Activated CD4-positive, alpha-beta T cell treated with anti-CD3 and anti-CD28 coated beads, Interleukin-2, amount 10 ng/mL, durations not matched to agents 24 days and 14 days (primary cell): ENCODE measurements at regions of chr10 and their contacts with region 1.

Region 1: GRCh38 chr10:50540069-50540825 is 83.5 kb downstream of the SGMS1 start:
- DNase-seq: peak; percentile 71
- H3K4me3 Mint-ChIP-seq: peak overlapping the region; percentile 63
- H3K27ac Mint-ChIP-seq: peak overlapping the region; percentile 87
- H3K4me1 Mint-ChIP-seq: peaks cover 72% of the 10 kb centered on the region
- H3K27me3 Mint-ChIP-seq: no peaks in the 10 kb centered on the region

Region 2: GRCh38 chr10:50325449-50326171 is 214.6 kb before region 1 on chr10:
- intact Hi-C with region 1: loop called (anchors 2 kb)
- DNase-seq: peak; percentile 74
- H3K4me3 Mint-ChIP-seq: peak overlapping the region; percentile 57
- H3K27ac Mint-ChIP-seq: peak overlapping the region; percentile 39
- H3K4me1 Mint-ChIP-seq: peaks cover 47% of the 10 kb centered on the region
- H3K27me3 Mint-ChIP-seq: no peaks in the 10 kb centered on the region

Region 3: GRCh38 chr10:50431791-50432190 is 108.5 kb before region 1 on chr10:
- intact Hi-C with region 1: loop called (anchors 1 kb)
- DNase-seq: peak; percentile 57
- H3K4me3 Mint-ChIP-seq: peak overlapping the region; percentile 11
- H3K27ac Mint-ChIP-seq: peak overlapping the region; percentile 14
- H3K4me1 Mint-ChIP-seq: peaks cover 22% of the 10 kb centered on the region
- H3K27me3 Mint-ChIP-seq: no peaks in the 10 kb centered on the region

Region 4: GRCh38 chr10:50508315-50509051 is 31.8 kb before region 1 on chr10:
- intact Hi-C with region 1: loop called (anchors 1 kb)
- DNase-seq: peak; percentile 75
- H3K4me3 Mint-ChIP-seq: no peak overlapping the region
- H3K27ac Mint-ChIP-seq: no peak overlapping the region
- H3K4me1 Mint-ChIP-seq: peaks cover 66% of the 10 kb centered on the region
- H3K27me3 Mint-ChIP-seq: no peaks in the 10 kb centered on the region

Region 5: GRCh38 chr10:50567384-50567783 is 27.1 kb after region 1 on chr10:
- intact Hi-C with region 1: no loop called
- DNase-seq: no peak
- H3K4me3 Mint-ChIP-seq: no peak overlapping the region
- H3K27ac Mint-ChIP-seq: no peak overlapping the region
- H3K4me1 Mint-ChIP-seq: no peaks in the 10 kb centered on the region
- H3K27me3 Mint-ChIP-seq: no peaks in the 10 kb centered on the region

Region 6: DNA sequence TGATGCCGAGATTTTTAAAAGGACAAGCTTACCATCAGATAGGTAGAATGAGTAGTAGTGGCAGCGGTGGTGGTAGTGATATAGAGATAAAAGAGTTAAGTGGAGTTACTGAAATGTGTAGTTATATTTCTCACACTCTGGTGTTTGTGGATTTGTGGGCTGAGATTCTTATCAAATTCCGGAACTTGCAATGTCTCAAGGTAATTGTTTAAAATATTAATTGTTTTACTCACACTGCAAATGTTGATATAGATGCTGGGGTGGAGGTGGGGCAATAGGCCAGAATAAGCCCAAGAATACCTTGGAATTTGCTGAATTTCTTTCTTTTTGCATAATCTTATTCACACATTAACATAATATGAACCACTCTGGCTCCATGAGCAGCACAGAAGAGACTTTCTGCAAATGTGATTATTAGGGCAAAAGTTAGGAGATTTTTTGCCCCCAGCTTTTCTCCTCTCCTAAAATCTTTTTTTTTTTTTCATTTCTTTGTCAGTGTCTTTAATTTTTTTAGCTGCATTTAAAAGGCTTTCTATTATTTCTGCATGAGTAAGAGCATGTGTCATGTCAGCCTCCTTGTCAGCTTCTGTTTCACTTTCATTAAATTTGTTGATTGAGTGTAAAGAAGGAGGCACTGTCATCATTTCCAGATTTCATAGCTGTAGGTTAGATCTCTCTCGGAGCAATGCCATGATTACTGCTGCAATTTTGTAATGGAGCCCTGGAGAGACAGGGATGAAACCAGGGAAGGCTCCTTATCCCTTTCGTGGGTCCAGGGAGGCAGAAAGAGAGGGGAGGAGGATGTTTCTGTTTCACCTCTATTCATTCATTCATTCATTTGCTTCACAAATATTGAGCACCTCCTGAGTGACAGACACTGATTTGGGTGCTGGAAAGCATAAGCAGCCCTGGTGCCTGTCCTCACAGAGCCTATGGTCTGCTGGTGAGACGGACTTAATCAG is 96.7 kb after region 1 on chr10:
- intact Hi-C with region 1: loop called (anchors 1 kb)
- DNase-seq: peak; percentile 83
- H3K4me3 Mint-ChIP-seq: peak overlapping the region; percentile 65
- H3K27ac Mint-ChIP-seq: peak overlapping the region; percentile 73
- H3K4me1 Mint-ChIP-seq: peaks cover 30% of the 10 kb centered on the region
- H3K27me3 Mint-ChIP-seq: peaks cover 60% of the 10 kb centered on the region